Activated T-helper 2 cell treated with anti-CD3 and anti-CD28 coated beads, Interferon-gamma antibody, Interleukin-2, Interleukin-4, amounts not matched to agents 10 μg/mL and 5 μg/mL and 100 μg/mL, durations not matched to agents 14 hours and 24 hours and 36 hours (primary cell): ENCODE measurements at regions of chr10 and their contacts with region 1.

Region 1: DNA sequence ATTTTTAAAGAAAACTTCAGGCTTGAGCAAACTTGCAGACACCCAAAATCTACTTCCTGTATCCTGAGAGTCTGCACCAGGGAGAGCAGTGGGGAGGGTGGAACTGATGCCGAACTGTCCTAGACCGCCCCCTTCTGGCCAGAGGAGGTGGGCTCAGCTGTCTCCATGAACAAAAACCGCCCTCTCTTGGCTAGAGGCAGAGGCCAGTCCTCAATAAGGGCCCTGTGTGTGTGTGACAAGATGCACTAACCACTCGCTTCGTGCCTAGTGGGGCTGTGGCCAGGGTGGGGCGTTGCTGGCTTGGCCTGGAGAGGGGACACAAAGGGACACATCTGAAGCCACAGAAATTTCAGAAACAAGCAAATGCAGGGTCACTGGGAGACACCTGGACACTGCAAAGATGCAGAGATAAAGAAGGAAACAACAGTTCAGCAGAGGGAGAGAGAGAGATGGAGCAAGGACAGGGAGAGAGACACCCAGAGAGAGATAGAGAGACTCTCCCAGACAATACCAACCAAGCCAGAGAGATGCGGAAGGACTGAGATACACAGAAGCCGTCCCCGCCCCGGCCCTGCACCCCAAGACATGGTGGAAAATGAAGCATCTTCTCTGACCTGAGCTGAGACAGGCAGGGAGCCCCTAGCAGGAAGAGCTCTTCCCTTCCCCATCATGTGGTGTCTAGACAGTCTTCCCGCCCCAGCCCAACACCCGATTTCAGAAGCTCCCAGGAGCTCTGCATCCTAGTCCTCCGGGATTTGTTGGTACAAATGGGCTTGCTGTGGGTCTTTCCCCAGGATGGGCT is 22.7 kb upstream of the FXYD4 start:
- DNase-seq: peak; percentile 82
- H3K4me3 Mint-ChIP-seq: no peak overlapping the region
- H3K27ac Mint-ChIP-seq: peak overlapping the region; percentile 2
- H3K4me1 Mint-ChIP-seq: peaks cover 26% of the 10 kb centered on the region
- H3K27me3 Mint-ChIP-seq: peaks cover 8% of the 10 kb centered on the region

Region 2: DNA sequence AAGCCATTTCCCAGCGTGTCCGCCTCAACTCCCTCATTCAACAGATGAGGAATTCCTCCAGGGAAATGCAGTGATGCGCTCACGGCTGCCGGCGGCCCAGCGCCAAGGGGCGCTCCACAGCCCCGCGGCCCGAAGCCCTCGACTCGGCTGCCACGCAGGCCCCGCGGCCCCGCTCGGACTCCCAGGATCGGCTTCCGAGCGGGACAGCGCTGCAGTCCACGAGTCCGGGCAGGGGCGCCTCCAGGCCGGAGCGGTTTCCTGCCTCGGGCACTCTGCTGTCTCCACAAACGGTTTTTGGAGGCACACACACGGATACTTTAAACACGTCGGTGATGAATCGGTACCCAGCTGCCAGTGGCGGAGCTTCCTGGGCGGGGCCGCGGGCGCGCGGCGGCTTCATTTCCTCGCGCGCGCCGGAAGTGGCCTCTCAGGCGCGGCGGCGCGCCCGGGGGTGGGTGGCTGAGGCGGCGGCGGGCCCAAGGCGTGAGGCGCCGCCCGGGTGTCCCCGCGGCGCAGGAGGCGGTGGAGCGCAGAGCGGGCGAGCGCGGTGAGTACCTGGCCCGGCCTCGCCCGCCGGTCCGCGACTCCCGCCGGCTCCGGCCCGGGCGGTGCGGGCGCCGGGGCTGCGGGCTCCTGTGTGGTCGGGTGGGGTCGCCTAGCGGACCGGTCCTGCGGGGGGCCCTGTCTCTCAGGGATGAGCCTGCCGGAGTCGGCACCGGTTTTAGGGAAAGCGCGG is 210.5 kb before region 1 on chr10 and contains the start of gene CSGALNACT2:
- intact Hi-C with region 1: no loop called
- DNase-seq: peak; percentile 88
- H3K4me3 Mint-ChIP-seq: peak within 1 kb of the TSS; percentile 96
- H3K27ac Mint-ChIP-seq: peak within 1 kb of the TSS; percentile 100
- H3K4me1 Mint-ChIP-seq: peaks cover 55% of the 10 kb centered on the region
- H3K27me3 Mint-ChIP-seq: no peaks in the 10 kb centered on the region
- total RNA-seq, gene CSGALNACT2: 25.2 and 25.6 TPM in 2 replicates

Region 3: DNA sequence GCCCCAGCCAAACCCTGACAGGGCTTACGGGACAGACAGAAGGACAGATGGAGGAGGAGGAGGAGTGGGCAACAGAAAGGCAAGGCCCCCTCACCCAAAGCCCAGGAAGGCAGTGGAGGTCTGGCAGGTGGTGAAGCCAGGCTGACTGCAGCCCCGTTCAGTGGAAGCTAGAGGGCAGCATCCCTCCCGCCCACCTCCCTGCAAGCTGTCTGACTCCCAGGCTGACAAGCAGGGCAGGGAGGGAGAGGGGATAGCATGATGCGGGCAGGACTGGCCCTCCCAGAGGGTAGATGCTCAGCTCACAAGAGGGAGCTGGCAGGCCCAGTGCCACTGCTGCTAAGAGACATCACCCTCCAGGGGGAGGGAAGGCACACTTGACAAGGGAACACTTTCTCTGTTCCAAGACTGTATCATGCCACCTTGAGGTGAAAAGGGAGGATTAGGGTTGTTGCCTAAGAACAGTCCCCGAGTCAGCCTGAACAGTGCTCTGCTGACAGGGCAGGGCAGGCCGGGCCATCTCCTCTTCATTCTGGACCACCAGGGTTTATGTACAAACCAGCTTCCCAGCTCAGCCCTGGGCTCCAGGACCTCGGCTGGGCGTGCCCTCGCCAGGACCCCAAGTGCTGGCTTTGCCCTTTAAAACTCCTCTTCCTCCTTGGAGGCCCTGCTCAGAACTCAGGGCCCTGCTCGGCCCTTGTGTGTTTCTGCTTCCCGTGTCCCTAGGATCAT is 143.6 kb before region 1 on chr10:
- intact Hi-C with region 1: loop called (anchors 1 kb)
- DNase-seq: peak; percentile 30
- H3K4me3 Mint-ChIP-seq: no peak overlapping the region
- H3K27ac Mint-ChIP-seq: no peak overlapping the region
- H3K4me1 Mint-ChIP-seq: peaks cover 7% of the 10 kb centered on the region
- H3K27me3 Mint-ChIP-seq: no peaks in the 10 kb centered on the region

Region 4: GRCh38 chr10:43219186-43219837 is 129.4 kb before region 1 on chr10:
- intact Hi-C with region 1: no loop called
- DNase-seq: no peak
- H3K4me3 Mint-ChIP-seq: no peak overlapping the region
- H3K27ac Mint-ChIP-seq: no peak overlapping the region
- H3K4me1 Mint-ChIP-seq: no peaks in the 10 kb centered on the region
- H3K27me3 Mint-ChIP-seq: peaks cover 9% of the 10 kb centered on the region

Region 5: GRCh38 chr10:43229208-43230061 is 119.3 kb before region 1 on chr10:
- intact Hi-C with region 1: loop called (anchors 1 kb)
- DNase-seq: no peak
- H3K4me3 Mint-ChIP-seq: peak overlapping the region; percentile 66
- H3K27ac Mint-ChIP-seq: no peak overlapping the region
- H3K4me1 Mint-ChIP-seq: peaks cover 31% of the 10 kb centered on the region
- H3K27me3 Mint-ChIP-seq: peaks cover 42% of the 10 kb centered on the region

Region 6: DNA sequence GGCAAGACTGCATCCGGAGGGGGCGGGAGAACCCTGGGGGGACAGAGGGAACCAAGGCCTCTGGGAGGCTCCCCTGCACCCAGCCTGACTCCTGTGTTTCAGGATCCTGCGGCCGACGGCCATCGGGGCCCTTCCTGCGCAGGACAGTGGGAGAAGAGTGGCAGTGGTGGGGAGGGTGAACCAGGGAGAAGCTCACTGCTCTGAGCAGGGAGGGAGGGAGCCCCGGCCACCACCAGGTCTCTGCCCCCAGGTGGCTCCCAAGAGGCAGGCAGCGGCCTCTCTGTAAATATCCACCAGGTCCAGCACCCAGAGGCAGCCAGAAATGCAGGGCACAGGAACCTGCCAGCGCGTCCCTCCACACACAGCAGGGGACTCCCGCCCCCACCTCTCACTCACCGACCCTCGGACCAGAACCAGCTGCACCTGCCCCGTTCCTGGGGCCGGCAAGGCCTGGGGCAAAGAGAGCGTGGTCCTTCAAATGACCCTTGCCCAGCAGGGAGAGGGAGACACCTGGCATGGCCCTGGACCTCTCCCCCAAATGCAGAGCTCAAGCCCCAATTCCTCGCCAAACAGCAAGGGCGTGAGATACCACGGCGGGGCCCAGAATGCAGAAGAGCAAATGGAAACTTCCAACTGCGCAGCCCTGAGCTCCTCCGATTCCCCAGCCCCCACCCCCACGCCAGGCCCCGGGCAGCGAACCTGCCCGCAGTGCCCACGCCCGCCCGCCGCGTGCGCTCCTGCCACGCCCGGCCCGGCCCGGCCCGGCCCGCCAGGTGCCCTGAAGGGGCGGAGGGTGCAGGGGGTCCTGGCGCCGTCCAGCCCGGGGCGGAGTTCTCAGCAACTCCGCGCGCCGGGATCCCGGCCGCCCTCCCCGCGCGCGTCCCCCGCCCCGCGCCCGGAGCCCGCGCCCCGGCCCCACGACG is 82.7 kb before region 1 on chr10:
- intact Hi-C with region 1: loop called (anchors 1 kb)
- DNase-seq: no peak
- H3K4me3 Mint-ChIP-seq: peak overlapping the region; percentile 60
- H3K27ac Mint-ChIP-seq: no peak overlapping the region
- H3K4me1 Mint-ChIP-seq: no peaks in the 10 kb centered on the region
- H3K27me3 Mint-ChIP-seq: peaks cover 55% of the 10 kb centered on the region

Region 7: DNA sequence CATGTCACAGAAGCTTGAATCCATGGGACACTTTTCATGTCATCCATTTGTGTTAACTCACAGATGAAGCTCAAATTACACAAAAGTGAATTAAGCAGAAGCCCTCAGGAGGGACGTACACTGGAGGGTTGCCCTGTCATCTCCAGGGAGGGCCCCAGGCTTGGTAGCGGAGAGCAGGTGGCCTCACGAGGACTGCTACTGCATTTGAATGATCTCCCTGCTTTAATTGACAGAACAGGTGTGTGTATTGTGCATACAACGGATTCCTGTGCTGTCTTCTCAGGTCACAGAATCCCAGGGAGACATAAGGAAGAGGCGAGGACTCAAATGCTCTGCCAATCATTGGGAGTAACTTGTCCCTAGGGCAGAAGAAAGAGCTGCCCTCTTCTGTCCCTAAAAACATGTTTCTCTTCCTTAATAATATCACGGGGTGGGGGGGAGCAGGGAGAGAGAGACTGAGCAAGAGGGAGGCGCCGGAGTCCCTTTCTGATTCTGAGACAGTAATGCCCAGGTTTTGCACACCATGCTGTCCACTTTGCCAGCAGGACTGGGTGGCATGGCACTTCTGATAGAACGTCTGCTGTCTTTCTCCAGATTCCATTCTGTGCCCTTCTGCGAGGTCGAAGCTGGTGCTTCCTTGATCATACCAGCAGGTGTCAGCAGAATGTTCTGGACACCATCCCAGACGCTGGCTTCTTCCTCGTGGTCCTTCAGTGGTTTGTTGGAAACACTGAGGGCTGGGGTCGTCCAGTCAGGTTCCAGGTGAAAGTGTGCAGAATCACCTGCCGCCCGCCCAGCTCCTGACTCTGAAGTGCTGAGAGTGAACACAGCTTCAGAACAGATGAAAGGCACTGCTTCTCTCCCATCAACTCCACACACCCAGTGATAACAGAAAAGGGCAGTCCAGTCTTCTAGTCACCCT is 55.7 kb before region 1 on chr10:
- intact Hi-C with region 1: loop called (anchors 1 kb)
- DNase-seq: peak; percentile 37
- H3K4me3 Mint-ChIP-seq: peak overlapping the region; percentile 19
- H3K27ac Mint-ChIP-seq: peak overlapping the region; percentile 65
- H3K4me1 Mint-ChIP-seq: peaks cover 51% of the 10 kb centered on the region
- H3K27me3 Mint-ChIP-seq: peaks cover 10% of the 10 kb centered on the region